BJ (cell line): ENCODE measurements at regions of chr12 and their contacts with region 1.

Region 1: GRCh38 chr12:5073853-5074252 is 30.2 kb downstream of the KCNA5 start:
- DNase-seq: no peak
- H3K4me3 ChIP-seq: no peak overlapping the region
- H3K27me3 ChIP-seq: no peaks in the 10 kb centered on the region; the same call in 1 of the 2 replicates
- CTCF ChIP-seq: peak; percentile 44

Region 2: GRCh38 chr12:5083955-5084849 is 10.3 kb after region 1 on chr12:
- CTCF ChIA-PET with region 1: interaction called, 56 read pairs
- POLR2A ChIA-PET with region 1: no interaction called
- DNase-seq: peak; percentile 10
- H3K4me3 ChIP-seq: no peak overlapping the region
- H3K27me3 ChIP-seq: peaks cover 3% of the 10 kb centered on the region; the same call in 1 of the 2 replicates
- CTCF ChIP-seq: peak; percentile 70